MCF 10A (cell line): ENCODE measurements at regions of chr18 and their contacts with region 1.

Region 1: GRCh38 chr18:36296650-36297416 is 680 bp upstream of the FHOD3 start:
- DNase-seq: peak; percentile 71
- H3K4me3 Mint-ChIP-seq: no peak overlapping the region
- H3K27ac Mint-ChIP-seq: no peak overlapping the region
- H3K4me1 Mint-ChIP-seq: no peaks in the 10 kb centered on the region
- H3K27me3 Mint-ChIP-seq: no peaks in the 10 kb centered on the region
- CTCF ChIP-seq: peak; percentile 30

Region 2: GRCh38 chr18:36284671-36285295 is 12.1 kb before region 1 on chr18:
- CTCF ChIA-PET with region 1: interaction called, 13 read pairs
- POLR2A ChIA-PET with region 1: interaction called, 4 read pairs
- intact Hi-C with region 1: no loop called
- DNase-seq: peak; percentile 75
- H3K4me3 Mint-ChIP-seq: no peak overlapping the region
- H3K27ac Mint-ChIP-seq: no peak overlapping the region
- H3K4me1 Mint-ChIP-seq: no peaks in the 10 kb centered on the region
- H3K27me3 Mint-ChIP-seq: no peaks in the 10 kb centered on the region
- CTCF ChIP-seq: peak; percentile 67

Region 3: DNA sequence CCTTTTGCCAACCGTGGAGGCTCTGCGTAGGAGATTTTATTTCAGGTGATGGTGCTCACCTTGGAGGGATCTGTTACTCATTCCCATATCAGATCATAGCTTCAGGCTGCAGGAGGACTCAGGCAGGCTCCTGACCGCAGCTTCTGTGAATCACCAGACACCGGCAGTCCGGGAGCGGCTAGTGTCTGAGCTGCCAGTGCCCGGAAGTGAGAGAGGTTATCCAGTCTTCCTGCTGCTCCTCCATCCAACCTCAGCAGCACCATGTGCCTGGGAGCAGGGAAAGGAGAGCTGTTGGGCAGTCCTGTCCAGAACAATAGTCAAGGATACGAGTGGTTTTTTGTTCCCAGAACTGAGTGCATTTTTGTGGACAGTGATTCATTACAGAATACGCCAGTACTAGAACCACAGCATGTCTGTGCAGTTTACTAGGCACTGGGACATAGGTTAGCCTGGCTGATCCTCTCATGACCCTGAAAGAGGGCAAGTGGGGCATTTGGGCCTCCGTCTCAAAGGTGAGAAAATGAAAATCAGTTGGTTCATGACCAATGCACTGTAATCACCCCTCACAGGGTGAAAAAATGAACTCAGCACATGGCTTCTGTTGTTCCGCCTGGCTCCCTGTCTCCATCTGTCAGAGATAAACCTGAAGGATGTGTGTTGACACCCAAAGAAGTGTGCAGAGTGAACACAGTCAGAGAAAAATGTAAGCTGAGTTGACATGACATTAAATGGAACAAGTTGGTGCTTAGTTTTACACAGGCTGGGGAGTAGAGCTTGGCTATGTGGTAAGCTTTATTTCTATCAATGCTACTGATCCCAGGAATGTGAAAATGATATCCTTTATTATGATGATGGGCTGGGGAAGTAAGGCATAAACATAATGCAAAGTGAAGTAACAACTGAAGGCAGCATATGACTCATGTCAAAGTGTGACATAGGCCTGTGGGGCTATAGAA is 12.9 kb after region 1 on chr18:
- CTCF ChIA-PET with region 1: interaction called, 3 read pairs
- POLR2A ChIA-PET with region 1: interaction called, 28 read pairs
- intact Hi-C with region 1: no loop called
- DNase-seq: peak; percentile 98
- H3K4me3 Mint-ChIP-seq: peak overlapping the region; percentile 60
- H3K27ac Mint-ChIP-seq: peak overlapping the region; percentile 86
- H3K4me1 Mint-ChIP-seq: peaks cover 77% of the 10 kb centered on the region
- H3K27me3 Mint-ChIP-seq: no peaks in the 10 kb centered on the region
- CTCF ChIP-seq: no peak

Region 4: GRCh38 chr18:36314754-36315153 is 17.9 kb after region 1 on chr18:
- CTCF ChIA-PET with region 1: interaction called, 3 read pairs
- POLR2A ChIA-PET with region 1: interaction called, 28 read pairs
- intact Hi-C with region 1: no loop called
- DNase-seq: peak; percentile 61
- H3K4me3 Mint-ChIP-seq: no peak overlapping the region
- H3K27ac Mint-ChIP-seq: peak overlapping the region; percentile 81
- H3K4me1 Mint-ChIP-seq: peaks cover 47% of the 10 kb centered on the region
- H3K27me3 Mint-ChIP-seq: no peaks in the 10 kb centered on the region
- CTCF ChIP-seq: no peak

Region 5: DNA sequence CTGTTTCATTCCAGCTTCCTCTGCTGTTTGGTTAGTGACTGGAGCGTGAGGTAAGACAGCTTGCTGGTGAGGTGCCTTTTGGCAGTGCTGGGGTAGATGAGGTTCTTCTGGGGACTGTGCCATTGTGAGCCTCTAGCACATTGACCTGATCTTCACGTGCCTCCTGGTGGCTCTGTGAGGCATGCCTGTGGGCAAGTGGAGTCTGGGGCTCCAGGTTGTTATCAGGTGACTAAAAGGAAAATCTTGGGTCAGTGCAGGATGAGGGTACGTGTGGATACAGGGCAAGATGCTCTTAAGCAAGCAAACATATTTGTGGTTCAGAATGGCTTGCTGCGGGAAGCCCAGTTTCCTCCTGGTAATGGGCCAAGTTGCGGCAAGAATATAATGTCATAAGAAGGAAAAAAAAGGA is 76.1 kb after region 1 on chr18:
- CTCF ChIA-PET with region 1: no interaction called
- POLR2A ChIA-PET with region 1: no interaction called
- intact Hi-C with region 1: loop called (anchors 5 kb)
- DNase-seq: peak; percentile 78
- H3K4me3 Mint-ChIP-seq: no peak overlapping the region
- H3K27ac Mint-ChIP-seq: no peak overlapping the region
- H3K4me1 Mint-ChIP-seq: peaks cover 26% of the 10 kb centered on the region
- H3K27me3 Mint-ChIP-seq: no peaks in the 10 kb centered on the region
- CTCF ChIP-seq: no peak

Region 6: DNA sequence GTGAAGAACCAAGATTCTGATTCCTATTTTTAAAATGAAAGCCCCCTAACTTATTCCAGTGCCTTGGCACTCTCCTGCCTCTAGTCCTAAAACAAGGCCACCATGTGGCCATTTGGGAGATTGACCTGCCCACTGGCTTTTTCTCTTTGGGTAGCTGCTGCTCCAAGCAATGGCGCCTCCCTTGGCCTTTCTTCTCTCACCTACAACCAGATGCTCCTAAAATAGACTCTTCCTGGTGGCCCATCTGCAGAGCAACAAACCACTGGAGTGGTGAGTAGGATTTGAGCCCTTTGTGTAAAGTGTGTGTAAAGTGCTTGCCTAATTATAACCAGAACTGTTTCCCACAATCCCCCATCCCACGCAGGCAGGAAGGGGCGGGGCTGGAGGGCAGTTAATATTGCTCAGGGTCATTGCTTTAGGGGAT is 114.9 kb after region 1 on chr18:
- CTCF ChIA-PET with region 1: interaction called, 4 read pairs
- POLR2A ChIA-PET with region 1: no interaction called
- intact Hi-C with region 1: loop called (anchors 1 kb)
- DNase-seq: peak; percentile 60
- H3K4me3 Mint-ChIP-seq: no peak overlapping the region
- H3K27ac Mint-ChIP-seq: no peak overlapping the region
- H3K4me1 Mint-ChIP-seq: peaks cover 9% of the 10 kb centered on the region
- H3K27me3 Mint-ChIP-seq: no peaks in the 10 kb centered on the region
- CTCF ChIP-seq: peak; percentile 35

Region 7: GRCh38 chr18:36536426-36536825 is 239.6 kb after region 1 on chr18:
- CTCF ChIA-PET with region 1: no interaction called
- POLR2A ChIA-PET with region 1: no interaction called
- intact Hi-C with region 1: no loop called
- DNase-seq: no peak
- H3K4me3 Mint-ChIP-seq: no peak overlapping the region
- H3K27ac Mint-ChIP-seq: no peak overlapping the region
- H3K4me1 Mint-ChIP-seq: peaks cover 12% of the 10 kb centered on the region
- H3K27me3 Mint-ChIP-seq: no peaks in the 10 kb centered on the region
- CTCF ChIP-seq: no peak